GM10248 (cell line): ENCODE measurements at regions of chr17 and their contacts with region 1.

Region 1: DNA sequence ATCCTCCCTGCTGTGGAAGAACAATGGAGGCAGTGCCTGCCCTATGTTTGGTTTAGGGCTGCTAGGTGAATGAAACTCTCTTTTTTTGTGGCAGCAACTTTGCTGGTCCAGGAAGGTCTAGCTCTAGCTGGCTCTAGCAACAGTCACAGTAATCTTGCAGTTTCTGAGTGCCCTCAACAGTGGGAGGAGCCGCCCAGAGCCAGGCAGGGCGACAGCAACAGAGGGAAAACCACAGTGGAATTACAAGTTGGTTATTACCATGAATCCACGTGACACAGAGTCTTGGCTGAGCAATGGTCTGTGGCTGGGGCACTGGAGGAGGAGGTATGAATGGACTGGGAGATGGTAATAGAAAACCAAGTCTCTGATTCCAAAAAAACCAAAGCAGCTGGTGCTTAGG is 10.3 kb downstream of the HSPB9 start:
- DNase-seq: no peak
- CTCF ChIP-seq: no peak

Region 2: DNA sequence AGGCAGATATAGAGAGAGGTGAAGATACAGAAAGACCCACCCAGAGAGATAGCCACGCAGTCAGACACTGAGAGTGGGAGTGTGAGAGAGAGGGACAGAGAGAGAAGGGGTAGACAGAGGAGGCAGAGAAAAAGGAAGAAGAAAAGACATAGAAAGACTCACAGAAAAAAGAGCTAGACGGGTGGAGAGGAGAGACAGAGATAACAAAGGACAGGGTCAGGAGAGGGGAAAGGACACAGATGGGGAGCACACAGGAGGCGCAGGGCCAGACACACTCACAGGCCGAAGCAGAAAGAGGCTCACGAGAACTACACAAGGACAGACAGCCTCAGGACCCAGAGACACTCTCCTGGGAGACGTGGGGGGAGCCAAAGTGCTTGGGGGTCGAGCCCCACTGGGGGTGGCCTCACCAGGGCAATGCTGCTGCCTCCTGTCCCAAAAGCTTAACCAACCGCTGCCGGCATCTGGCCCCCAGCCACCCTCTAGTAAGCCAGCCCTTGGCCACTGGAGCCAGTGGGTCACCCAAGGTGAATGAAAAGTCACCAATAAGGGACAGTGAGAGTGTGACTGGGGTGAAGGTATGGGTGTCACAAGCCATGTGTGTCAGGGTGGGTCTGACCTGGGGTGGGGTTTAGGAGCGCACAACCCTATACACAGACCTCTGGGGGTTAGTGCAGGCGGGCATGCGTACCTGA is 38.4 kb before region 1 on chr17:
- CTCF ChIA-PET with region 1: no interaction called
- POLR2A ChIA-PET with region 1: no interaction called
- DNase-seq: no peak
- CTCF ChIP-seq: no peak

Region 3: GRCh38 chr17:42120770-42121769 is 11.9 kb before region 1 on chr17 and contains the start of gene KAT2A:
- CTCF ChIA-PET with region 1: interaction called, 47 read pairs
- POLR2A ChIA-PET with region 1: no interaction called
- DNase-seq: peak; percentile 94
- CTCF ChIP-seq: no peak

Region 4: DNA sequence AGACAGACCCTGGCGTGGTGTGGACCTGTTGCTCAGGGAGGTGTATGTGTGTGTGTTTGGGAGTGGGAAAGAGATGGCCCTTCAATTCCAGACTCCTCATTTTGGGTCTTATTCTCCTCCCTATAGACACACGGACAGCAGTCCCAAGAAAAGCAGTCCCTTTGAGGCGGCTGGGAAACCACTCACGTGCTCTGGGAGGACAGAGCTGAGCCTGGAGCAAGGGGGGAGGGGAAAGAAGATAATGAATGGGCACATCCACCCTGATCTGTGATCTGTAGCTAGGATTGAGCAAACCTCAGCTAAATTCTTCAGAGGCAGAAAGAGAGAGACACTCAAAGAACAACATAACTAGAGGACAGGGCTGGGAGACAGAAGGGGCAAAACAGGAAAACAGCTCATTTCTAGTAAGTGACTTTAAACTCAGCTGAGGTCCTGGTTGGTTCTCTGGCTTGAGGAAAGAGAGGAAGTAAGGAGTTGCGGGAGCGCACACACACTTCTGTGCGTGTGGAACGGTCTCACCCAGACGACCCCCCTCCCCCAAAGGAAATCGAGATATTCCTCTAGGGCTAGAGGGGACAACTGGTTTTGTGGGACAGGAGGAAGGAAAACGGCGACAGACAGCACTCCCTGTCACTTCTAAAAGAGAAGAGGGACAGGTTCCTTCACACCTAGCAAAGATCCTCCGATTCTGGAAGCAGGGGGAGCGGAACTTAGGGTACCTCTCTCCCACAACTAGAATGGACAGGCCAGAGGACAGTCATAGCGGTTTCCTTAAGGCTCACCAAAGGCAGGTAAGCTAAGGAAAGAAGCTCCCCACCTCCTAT is 21.2 kb after region 1 on chr17:
- CTCF ChIA-PET with region 1: interaction called, 15 read pairs
- POLR2A ChIA-PET with region 1: no interaction called
- DNase-seq: no peak
- CTCF ChIP-seq: no peak

Region 5: DNA sequence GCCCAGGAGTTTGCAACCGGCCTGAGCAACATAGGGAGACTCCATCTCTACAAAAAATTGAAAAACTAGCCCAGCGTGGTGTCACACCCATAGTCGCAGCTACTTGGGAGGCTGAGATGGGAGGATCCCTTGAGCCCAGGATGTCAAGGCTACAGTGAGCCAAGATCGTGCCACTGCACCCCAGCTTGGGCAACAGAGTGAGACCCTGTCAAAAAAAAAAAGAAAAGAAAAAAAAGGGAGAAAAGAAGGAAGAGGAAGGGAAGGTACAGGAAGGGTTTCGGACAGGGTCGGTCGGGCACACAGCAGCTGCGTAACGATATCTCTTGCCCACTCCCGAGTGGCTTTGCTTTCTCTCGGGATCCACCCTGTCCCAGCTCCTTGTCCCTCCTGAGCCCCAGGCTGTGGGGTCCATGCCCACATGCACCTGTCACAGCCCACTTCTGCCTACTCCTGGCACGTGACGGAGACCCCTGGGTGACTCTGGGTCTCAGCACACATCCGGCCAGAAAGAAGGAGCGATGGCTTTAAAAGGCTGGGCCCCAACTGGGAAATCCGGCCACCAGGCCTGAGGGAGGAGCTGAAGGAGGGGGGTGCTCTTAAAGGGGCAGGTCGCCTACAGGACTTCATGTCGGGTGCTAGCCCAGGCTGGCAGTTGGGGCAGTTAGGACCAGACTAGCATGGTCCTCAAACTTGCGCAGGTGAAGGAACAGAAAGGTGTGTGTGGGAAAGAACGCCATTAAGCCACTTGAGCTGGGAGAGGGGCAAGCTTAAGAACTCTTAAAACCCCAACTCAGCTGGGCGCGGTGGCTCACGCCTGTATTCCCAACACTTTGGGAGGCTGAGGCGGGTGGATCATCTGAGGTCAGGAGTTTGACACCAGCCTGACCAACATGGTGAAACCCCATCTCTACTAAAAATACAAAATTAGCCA is 61.3 kb after region 1 on chr17 and contains the start of gene GHDC:
- CTCF ChIA-PET with region 1: no interaction called
- POLR2A ChIA-PET with region 1: interaction called, 11 read pairs
- DNase-seq: peak; percentile 90
- CTCF ChIP-seq: no peak